ENCODE measurements at regions of chr7 and their contacts with region 1.

Region 1: DNA sequence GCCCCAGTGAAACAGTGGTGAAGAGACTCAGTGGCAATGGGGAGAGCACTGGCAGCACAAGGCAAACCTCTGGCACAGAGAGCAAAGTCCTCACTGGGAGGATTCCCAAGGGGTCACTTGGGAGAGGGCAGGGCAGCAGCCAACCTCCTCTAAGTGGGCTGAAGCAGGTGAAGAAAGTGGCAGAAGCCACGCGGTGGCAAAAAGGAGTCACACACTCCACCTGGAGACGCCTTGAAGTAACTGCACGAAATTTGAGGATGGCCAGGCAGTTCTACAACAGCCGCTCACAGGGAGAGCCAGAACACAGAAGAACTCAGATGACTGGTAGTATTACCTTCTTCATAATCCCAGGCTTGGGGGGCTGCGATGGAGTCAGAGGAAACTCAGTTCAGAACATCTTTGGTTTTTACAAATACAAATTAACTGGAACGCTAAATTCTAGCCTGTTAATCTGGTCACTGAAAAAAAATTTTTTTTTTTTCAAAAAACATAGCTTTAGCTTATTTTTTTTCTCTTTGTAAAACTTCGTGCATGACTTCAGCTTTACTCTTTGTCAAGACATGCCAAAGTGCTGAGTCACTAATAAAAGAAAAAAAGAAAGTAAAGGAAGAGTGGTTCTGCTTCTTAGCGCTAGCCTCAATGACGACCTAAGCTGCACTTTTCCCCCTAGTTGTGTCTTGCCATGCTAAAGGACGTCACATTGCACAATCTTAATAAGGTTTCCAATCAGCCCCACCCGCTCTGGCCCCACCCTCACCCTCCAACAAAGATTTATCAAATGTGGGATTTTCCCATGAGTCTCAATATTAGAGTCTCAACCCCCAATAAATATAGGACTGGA is 435 bp upstream of the IL6 start:
- DNase-seq: peak; percentile 7
- ATAC-seq: peak; percentile 79
- H3K4me3 ChIP-seq: peak overlapping the region in 1 of 3 experiments; percentile 5; a peak in 1 of 6 replicates
- H3K27ac ChIP-seq: no peak overlapping the region
- H3K4me1 ChIP-seq: peaks cover 21% of the 10 kb centered on the region
- H3K27me3 ChIP-seq: peaks cover 0 to 28% of the 10 kb centered on the region in 2 experiments; a peak in 4 of 5 replicates
- CTCF ChIP-seq: peak; percentile 54
- EP300 ChIP-seq: no peak
- POLR2A ChIP-seq: no peak
- RAD21 ChIP-seq: no peak

Region 2: GRCh38 chr7:22559829-22560489 is 166.6 kb before region 1 on chr7:
- CTCF ChIA-PET with region 1: interaction called, 32 read pairs
- POLR2A ChIA-PET with region 1: no interaction called
- in situ Hi-C with region 1: loop called (anchors 5 kb)
- intact Hi-C with region 1: loop called (anchors 1 kb)
- DNase-seq: peak; percentile 77
- ATAC-seq: peak; percentile 97
- H3K4me3 ChIP-seq: no peak overlapping the region
- H3K27ac ChIP-seq: no peak overlapping the region
- H3K4me1 ChIP-seq: peaks cover 8% of the 10 kb centered on the region; the same call in 1 of the 2 replicates
- H3K27me3 ChIP-seq: peaks cover 6 to 23% of the 10 kb centered on the region in 2 experiments; a peak in 3 of 5 replicates
- CTCF ChIP-seq: peak; percentile 80
- EP300 ChIP-seq: no peak
- POLR2A ChIP-seq: no peak
- RAD21 ChIP-seq: peak; percentile 84

Region 3: GRCh38 chr7:22782616-22783232 is 56.2 kb after region 1 on chr7:
- CTCF ChIA-PET with region 1: interaction called, 3 read pairs
- POLR2A ChIA-PET with region 1: no interaction called
- in situ Hi-C with region 1: no loop called
- intact Hi-C with region 1: loop called (anchors 5 kb)
- DNase-seq: peak; percentile 44
- ATAC-seq: peak; percentile 30
- H3K4me3 ChIP-seq: no peak overlapping the region
- H3K27ac ChIP-seq: no peak overlapping the region
- H3K4me1 ChIP-seq: peaks cover 55% of the 10 kb centered on the region
- H3K27me3 ChIP-seq: no peaks in the 10 kb centered on the region
- CTCF ChIP-seq: peak; percentile 68
- EP300 ChIP-seq: no peak
- POLR2A ChIP-seq: no peak
- RAD21 ChIP-seq: peak; percentile 50; the same call in 1 of the 2 replicates

Region 4: DNA sequence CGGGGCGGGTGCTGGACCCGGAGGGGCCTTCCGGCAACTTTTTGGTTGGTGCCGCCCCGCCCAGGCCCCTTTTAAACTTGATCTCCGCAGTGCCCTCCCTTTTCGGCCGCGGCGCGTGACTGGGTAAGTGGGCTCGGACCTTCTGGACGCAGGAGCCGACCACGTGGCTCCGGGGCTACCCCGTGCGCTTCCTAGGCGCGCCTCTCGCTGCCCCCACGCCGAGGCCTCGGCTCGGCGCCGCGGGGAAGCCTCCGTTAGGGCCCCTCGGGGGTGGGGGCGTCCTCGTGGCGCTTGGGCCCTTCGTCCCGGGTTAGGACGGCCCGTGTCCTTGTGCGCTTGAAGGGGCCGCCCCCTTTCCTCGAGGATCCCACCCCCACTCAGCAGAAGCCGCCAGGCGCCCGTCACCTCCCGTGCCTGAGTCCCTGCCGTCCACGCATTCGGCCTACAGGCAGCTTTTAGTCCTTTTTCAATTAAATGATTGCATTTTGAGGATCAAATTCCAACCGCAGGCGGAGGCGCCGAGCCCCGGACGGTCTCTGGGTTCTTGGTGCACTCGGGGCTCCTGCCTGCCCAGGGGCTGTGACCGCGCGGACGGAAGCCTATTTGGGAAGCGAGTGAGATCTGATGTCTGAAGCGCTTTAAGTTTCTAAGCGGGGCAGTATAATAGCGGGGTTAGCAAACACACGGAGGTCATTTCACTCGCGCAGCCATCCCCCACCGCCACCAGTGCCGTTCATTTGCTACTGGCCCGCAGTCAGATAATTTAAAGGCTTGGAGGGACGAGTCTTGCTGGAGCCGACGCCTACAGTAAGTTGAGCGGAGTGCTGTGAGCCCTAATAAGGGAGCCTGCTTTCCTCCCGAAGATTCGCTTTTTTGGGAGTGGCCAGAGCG is 127.8 kb after region 1 on chr7:
- CTCF ChIA-PET with region 1: no interaction called
- POLR2A ChIA-PET with region 1: no interaction called
- in situ Hi-C with region 1: no loop called
- intact Hi-C with region 1: loop called (anchors 5 kb)
- DNase-seq: peak; percentile 74
- ATAC-seq: peak; percentile 84
- H3K4me3 ChIP-seq: peak overlapping the region; percentile 51 to 79 (median 79)
- H3K27ac ChIP-seq: peak overlapping the region; percentile 69
- H3K4me1 ChIP-seq: peaks cover 32% of the 10 kb centered on the region
- H3K27me3 ChIP-seq: peaks cover 0 to 21% of the 10 kb centered on the region in 2 experiments; a peak in 3 of 5 replicates
- CTCF ChIP-seq: peak; percentile 41
- EP300 ChIP-seq: 0 out of 4 replicates have a peak, but pooled peaks of 1 of the 2 experiments have one; percentile 5
- POLR2A ChIP-seq: peak; percentile 56 to 71; a peak in 3 of 4 replicates
- RAD21 ChIP-seq: peak; percentile 51; the same call in 1 of the 2 replicates

Region 5: GRCh38 chr7:23055582-23056178 is 329.1 kb after region 1 on chr7:
- CTCF ChIA-PET with region 1: interaction called, 9 read pairs
- POLR2A ChIA-PET with region 1: no interaction called
- in situ Hi-C with region 1: loop called (anchors 5 kb)
- intact Hi-C with region 1: loop called (anchors 1 kb)
- DNase-seq: peak; percentile 52
- ATAC-seq: peak; percentile 86
- H3K4me3 ChIP-seq: no peak overlapping the region
- H3K27ac ChIP-seq: no peak overlapping the region
- H3K4me1 ChIP-seq: no peaks in the 10 kb centered on the region
- H3K27me3 ChIP-seq: no peaks in the 10 kb centered on the region
- CTCF ChIP-seq: peak; percentile 88
- EP300 ChIP-seq: no peak
- POLR2A ChIP-seq: no peak
- RAD21 ChIP-seq: peak; percentile 82